Gastrocnemius medialis (tissue), 4 donors: ENCODE measurements at regions of chr4 and their contacts with region 1.

Region 1: GRCh38 chr4:38675146-38676121 is 11.4 kb downstream of the KLF3 start:
- DNase-seq: peak; percentile 45 to 59
- ATAC-seq: peak; percentile 57 to 61
- H3K4me3 ChIP-seq: no peak overlapping the region
- H3K27ac ChIP-seq: peak overlapping the region; percentile 69 to 98 (median 72)
- H3K4me1 ChIP-seq: peaks cover 78 to 89% of the 10 kb centered on the region in 2 donors
- H3K27me3 ChIP-seq: no peaks in the 10 kb centered on the region
- CTCF ChIP-seq: peak; percentile 87 to 96 (median 91)
- POLR2A ChIP-seq: no peak

Region 2: DNA sequence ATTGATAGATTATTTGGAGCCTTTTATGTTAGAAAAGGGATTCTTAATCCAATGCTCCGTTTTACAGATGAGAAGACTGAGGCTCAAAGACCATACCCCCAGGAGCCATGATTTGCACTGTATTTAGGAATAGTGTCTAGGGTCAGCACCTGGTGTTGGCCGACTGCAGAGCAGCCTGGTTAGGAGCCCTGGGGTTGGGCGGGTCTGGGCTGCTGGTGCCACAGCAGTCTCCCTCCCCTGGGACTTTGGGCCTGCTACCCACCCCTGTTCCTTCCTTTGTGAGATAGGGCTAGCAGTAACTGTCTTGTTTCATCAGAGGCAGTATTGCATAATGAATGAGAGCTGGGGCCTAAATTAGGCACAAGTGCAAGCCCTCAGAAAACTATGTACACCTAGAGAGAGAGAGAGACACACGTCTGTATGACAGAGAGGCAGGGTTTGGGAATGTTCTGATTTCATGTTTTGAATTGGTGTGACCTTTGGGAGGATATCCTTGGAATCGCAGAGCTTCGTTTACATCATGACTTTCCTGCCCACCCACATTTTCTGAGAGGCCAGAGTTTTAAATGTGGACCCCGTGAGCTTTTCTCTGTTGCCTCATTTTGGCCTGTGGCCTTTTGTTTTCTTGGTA is 603.5 kb before region 1 on chr4:
- in situ Hi-C with region 1: no loop called
- intact Hi-C with region 1: loop called (anchors 2 kb)
- DNase-seq: peak in 1 of 2 donors; percentile 53
- ATAC-seq: peak; percentile 82 to 96
- H3K4me3 ChIP-seq: no peak overlapping the region
- H3K27ac ChIP-seq: peak overlapping the region; percentile 1 to 73 (median 56)
- H3K4me1 ChIP-seq: peaks cover 34 to 46% of the 10 kb centered on the region in 2 donors
- H3K27me3 ChIP-seq: no peaks in the 10 kb centered on the region
- CTCF ChIP-seq: no peak
- POLR2A ChIP-seq: no peak

Region 3: DNA sequence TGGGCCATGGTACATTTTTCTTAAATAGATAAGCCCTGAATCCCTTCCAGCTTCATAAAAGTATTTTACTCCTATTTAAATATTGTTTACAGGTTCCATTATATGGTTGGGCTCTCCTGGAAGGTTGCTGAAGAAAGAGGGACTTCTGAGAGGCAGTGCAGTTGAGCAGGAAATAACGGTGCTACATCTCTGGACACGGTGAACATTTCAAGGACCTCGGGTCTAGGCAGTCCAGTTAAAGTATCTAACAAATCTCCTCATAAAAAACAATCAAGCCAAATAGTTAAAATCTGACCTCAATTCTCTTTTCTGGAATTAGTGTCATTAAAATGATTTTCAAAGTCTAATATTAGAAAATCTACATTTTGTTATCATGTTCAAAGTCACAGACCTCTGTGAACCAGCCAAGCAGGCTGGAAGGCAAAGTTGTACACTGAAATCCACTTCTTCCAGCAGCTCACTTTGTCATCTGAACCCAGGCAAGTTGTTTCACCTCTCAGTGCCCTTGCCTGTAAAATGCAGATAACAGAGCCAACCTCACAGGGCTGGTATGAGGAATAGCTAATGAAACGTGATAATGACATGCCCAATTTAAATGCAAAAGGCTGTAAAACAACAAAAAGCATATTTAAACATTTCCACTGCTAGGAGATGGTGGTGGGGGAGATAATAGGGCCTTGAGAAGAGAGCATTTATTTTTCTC is 278.4 kb before region 1 on chr4:
- in situ Hi-C with region 1: no loop called
- intact Hi-C with region 1: loop called (anchors 10 kb)
- DNase-seq: no peak
- ATAC-seq: no peak
- H3K4me3 ChIP-seq: no peak overlapping the region
- H3K27ac ChIP-seq: no peak overlapping the region
- H3K4me1 ChIP-seq: no peaks in the 10 kb centered on the region
- H3K27me3 ChIP-seq: no peaks in the 10 kb centered on the region
- CTCF ChIP-seq: no peak
- POLR2A ChIP-seq: no peak

Region 4: DNA sequence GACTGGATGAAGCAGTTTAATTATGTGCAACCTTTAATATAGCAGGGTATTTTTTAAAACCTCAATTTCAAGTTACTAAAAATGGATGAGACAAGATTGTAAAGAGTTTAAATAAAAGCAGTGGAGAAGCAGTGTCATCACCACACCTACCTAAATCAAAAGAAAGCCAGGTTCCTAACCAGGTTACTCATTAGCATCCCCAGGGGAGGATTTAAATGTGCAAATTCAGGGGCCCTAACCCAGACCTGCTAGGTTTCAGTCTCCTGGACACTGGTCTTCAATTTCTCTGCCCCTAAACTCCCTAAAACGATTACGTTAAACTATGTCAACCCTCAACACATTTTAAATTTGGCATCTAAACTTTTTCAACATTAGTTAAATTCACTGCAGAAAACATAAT is 128.4 kb before region 1 on chr4:
- in situ Hi-C with region 1: no loop called
- intact Hi-C with region 1: no loop called
- DNase-seq: no peak
- ATAC-seq: no peak
- H3K4me3 ChIP-seq: no peak overlapping the region
- H3K27ac ChIP-seq: no peak overlapping the region
- H3K4me1 ChIP-seq: no peaks in the 10 kb centered on the region
- H3K27me3 ChIP-seq: no peaks in the 10 kb centered on the region
- CTCF ChIP-seq: no peak
- POLR2A ChIP-seq: no peak